ENCODE measurements at regions of chr10 and their contacts with region 1.

Region 1: DNA sequence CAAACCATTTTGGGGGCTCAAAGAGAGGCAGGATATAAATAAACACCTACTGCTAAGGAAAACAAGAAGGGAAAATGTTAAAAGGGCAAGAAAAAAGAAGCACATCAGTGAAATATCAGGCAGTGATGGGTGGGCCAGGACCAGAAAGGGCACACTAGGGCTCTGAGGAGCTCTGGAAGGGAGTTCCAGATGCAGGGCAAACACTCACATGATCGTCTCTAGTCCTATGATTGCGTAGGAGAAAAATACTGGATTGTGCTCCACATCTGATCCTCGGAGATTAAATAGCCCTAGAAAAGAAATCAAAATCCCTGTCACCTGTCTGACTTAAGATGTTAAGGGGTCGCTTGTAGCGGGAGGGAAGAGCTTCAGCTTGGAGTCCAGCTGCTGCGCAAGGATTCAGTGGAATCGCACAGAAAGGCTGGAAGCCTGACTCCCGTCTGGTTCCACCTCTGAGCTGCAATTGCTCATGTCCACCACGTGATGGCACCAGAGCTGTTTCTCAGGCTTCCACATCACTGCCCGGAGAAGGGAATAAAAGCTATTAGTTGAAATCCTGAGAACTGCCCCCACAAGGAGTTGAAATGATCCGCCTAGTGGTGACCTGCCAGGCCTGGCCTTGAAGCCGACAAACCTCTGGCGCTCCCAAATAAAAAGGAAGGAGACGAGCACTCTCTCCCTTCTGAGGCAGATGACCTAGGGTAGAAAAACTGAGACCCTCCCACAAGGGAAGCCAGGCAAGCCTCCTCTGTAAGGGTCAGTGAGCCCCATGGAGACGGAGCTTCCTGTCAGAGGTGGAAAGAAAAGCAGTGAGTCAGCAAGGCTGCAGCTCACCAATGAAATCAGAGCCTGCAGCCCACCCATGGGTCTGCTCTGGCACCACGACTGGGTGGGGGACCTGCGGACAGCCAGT is 39.2 kb downstream of the XPNPEP1 start:
- H3K4me3 Mint-ChIP-seq: no peak overlapping the region
- H3K27ac Mint-ChIP-seq: no peak overlapping the region
- H3K4me1 Mint-ChIP-seq: peaks cover 27% of the 10 kb centered on the region
- H3K27me3 Mint-ChIP-seq: no peaks in the 10 kb centered on the region

Region 2: GRCh38 chr10:110016039-110016438 is 131.9 kb after region 1 on chr10:
- intact Hi-C with region 1: loop called (anchors 10 kb)
- H3K4me3 Mint-ChIP-seq: no peak overlapping the region
- H3K27ac Mint-ChIP-seq: peak overlapping the region; percentile 79
- H3K4me1 Mint-ChIP-seq: peaks cover 47% of the 10 kb centered on the region
- H3K27me3 Mint-ChIP-seq: no peaks in the 10 kb centered on the region

Region 3: GRCh38 chr10:110101464-110102144 is 217.5 kb after region 1 on chr10:
- intact Hi-C with region 1: loop called (anchors 10 kb)
- H3K4me3 Mint-ChIP-seq: no peak overlapping the region
- H3K27ac Mint-ChIP-seq: no peak overlapping the region
- H3K4me1 Mint-ChIP-seq: peaks cover 11% of the 10 kb centered on the region
- H3K27me3 Mint-ChIP-seq: no peaks in the 10 kb centered on the region

Measured in dendritic cell treated with granulocyte-macrophage colony-stimulating factor and Interleukin-4, amounts not matched to agents 40 ng/mL and 50 ng/mL, for 4 days (primary cell).